T-cell (primary cell): ENCODE measurements at regions of chr10 and their contacts with region 1.

Region 1: DNA sequence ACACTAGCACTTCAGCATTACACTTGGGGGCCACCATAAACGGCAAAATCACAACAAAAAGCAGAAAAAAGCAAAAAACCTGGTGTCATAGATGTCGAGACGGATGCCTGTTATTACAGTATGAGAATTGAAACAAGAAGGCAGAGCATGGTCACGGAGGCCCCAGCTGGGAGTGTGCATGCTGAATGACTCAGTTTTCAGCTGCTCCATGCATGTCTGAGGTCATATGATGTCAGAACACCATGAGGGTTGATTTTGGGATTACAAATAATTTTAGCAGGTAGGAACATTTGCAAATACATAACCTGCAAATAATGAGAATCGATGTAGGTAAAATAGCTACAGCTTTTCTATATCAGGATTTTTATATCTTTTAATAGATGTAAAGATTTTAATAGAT is 19.1 kb downstream of the ZMYND11 start:
- DNase-seq: no peak
- ATAC-seq: no peak
- H3K4me3 ChIP-seq: no peak overlapping the region
- H3K4me3 Mint-ChIP-seq: no peak overlapping the region
- H3K27ac ChIP-seq: no peak overlapping the region
- H3K27ac Mint-ChIP-seq: no peak overlapping the region
- H3K4me1 ChIP-seq: no peaks in the 10 kb centered on the region
- H3K4me1 Mint-ChIP-seq: peaks cover 47 to 53% (median 47%) of the 10 kb centered on the region in 3 donors
- H3K27me3 ChIP-seq: no peaks in the 10 kb centered on the region
- H3K27me3 Mint-ChIP-seq: no peaks in the 10 kb centered on the region

Region 2: GRCh38 chr10:178208-178607 is 23.9 kb after region 1 on chr10:
- CTCF ChIA-PET with region 1: interaction called in 1 of 2 experiments, 10 read pairs
- POLR2A ChIA-PET with region 1: no interaction called
- DNase-seq: peak in 1 of 35 experiments; percentile 30
- ATAC-seq: no peak
- H3K4me3 ChIP-seq: no peak overlapping the region
- H3K4me3 Mint-ChIP-seq: no peak overlapping the region
- H3K27ac ChIP-seq: no peak overlapping the region
- H3K27ac Mint-ChIP-seq: no peak overlapping the region
- H3K4me1 ChIP-seq: no peaks in the 10 kb centered on the region
- H3K4me1 Mint-ChIP-seq: peaks cover 18 to 31% (median 25%) of the 10 kb centered on the region in 3 donors
- H3K27me3 ChIP-seq: no peaks in the 10 kb centered on the region
- H3K27me3 Mint-ChIP-seq: no peaks in the 10 kb centered on the region